Posterior vena cava (tissue), 2 donors: ENCODE measurements at regions of chr7 and their contacts with region 1.

Region 1: DNA sequence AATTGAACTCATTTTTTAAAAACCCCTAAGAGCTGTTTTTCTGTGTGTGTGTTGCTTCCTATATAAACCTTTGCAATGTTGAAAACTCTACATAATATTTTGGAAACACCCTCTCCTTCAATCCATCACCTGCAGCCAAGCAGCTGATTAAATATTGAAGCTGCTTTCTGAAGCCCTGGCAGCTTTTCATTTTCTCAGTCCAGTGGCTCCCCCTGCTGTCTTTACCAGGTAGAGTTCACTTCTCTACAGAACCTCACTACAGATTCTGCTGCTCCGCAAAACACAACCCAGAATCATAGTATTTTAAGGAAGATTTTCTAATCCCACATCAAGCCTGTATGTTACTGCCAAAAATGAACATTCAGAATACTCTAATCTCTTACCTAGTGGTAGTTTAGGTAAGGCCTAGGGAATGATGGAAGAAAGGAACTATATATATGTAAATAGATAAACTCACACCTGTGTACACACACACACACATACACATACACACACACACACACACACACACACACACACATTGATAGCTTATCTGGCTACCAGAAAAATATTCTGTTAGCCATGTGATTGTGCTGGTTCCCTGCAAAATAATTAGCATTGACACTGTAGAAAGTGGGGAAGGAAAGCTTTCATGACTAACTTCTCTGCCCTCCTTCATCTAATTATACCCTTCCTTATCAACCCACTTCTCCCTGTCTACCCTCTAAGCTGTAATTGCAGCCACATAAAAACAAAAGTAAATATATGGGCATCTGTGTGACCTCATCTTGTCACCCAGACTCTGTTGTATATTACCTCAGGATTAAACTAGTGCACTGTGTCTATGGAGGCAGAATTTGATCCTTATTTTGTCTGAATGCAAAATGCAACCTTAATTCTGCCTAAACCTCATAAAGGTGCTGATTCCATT is 229.5 kb upstream of the FZD1 start:
- DNase-seq: no peak

Region 2: GRCh38 chr7:90455163-90456030 is 579.3 kb before region 1 on chr7:
- intact Hi-C with region 1: loop called (anchors 10 kb)
- DNase-seq: no peak

Region 3: DNA sequence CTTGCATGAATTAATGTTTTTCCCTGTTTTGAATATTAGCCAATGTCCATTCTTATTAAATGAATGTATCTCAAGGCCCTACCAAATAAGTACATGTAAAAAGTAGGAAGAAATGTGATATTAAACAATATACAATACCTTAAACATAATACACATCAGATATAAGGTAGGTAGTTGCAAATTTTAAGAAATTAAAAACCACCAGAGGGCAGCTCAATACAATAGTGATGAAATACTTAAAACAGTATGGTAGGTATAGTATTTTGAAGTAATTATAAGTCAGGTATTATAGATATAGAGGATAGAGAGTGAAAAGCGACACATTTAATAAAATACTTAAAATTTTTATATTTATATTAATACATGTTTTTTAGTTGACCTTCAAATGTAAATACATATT is 482.2 kb before region 1 on chr7:
- intact Hi-C with region 1: loop called (anchors 10 kb)
- DNase-seq: no peak

Region 4: DNA sequence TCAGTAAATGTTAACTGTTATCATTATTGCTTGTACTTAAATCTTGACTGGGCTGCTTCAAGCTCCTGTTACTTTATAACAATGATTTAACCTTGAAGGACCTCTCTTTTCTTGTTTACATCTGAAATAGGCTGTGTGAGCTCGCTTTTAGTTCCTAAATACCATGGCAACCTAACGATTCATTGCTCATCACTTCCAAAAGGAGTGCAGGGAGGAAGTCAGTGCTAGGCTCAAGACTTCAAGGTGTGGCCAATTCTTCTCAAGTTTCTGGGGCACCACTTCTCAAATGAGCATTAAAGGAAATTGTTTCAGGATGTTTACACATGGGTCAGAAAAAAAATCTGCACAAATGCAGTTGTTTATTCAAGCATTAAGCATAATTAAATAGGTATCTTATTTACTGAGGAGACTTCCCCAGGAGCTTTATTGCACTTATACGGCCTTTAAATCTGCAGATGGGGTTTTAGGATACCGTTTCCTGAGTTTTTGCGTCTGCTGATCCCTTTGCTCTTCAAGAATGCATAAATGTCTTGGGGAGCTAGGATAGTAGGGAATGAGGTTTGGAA is 561.7 kb after region 1 on chr7:
- intact Hi-C with region 1: no loop called
- DNase-seq: no peak